Astrocyte of the cerebellum (primary cell): ENCODE measurements at regions of chr4 and their contacts with region 1.

Region 1: DNA sequence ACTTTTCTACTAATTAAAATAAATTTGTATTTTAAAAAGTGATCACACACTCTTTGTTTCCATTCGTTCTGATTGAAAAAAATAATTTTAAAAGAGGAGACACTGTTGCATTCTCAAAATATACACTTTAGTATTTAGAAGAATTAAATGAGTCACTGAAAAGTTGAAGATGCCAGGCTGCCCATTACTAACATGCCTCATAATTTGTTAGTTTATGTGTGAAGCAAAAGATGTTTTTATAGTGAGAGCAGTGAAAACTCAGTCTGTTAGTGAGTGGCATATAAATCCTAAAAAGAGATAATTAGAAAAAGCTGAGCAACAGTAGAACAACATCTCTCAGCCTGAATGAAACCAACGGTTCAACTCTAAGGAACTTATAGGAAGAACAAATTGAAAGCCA is 143.4 kb downstream of the CDS1 start:
- DNase-seq: no peak
- H3K4me3 ChIP-seq: no peak overlapping the region
- CTCF ChIP-seq: no peak

Region 2: DNA sequence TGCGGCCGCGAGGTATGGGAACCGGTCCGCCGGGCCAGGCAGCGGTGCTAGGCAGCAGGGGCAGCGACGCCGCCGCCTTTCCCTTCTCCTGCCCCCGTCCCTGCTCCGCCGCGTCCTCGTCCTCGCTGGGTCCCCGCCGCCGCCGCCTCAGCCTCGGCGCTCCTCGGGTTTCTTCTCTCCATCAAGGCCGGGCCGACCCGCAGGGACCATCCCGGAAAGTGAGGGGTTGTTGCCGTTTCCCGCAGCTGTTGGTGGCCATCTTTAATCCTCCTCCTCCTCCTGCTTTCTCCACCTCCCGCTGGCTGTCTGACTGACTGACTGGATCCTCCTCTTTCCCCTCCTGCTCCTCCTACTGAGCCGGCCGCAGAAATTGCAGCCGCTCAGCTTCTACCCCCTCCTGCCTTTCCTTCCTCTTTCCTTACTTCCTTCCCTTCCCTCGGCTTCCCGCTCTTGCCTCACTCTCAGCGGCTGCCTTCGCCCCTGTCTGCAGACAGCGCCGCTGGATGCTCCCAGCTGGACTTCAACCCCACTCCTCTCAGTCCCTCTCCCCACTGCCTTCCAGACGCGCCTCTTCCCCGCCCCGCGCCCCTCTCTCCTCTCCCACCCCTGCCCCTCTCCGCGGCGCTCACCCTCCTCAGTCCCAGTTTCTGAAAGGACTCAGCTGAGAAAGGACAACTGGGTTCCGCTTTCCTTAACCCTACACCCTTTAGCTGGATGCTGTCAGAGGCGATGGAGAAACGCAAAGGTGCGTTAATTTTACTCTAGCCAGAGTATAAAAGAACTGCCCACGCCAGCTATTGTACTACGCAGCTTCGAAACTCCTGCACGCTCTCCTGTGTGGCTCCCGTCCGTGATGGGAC is 240.3 kb after region 1 on chr4 and contains the start of gene WDFY3:
- in situ Hi-C with region 1: loop called (anchors 25 kb)
- DNase-seq: peak; percentile 79
- H3K4me3 ChIP-seq: peak within 1 kb of the TSS; percentile 73
- CTCF ChIP-seq: no peak